Naive thymus-derived CD4-positive, alpha-beta T cell (primary cell): ENCODE measurements at regions of chr7 and their contacts with region 1.

Region 1: GRCh38 chr7:75738987-75739795 is 450 bp upstream of the HIP1 start:
- DNase-seq: peak; percentile 98 to 99 (median 99)
- ATAC-seq: peak; percentile 97
- H3K4me3 ChIP-seq: peak overlapping the region; percentile 93
- H3K4me3 Mint-ChIP-seq: peak overlapping the region; percentile 82 to 100 (median 97)
- H3K27ac ChIP-seq: peak overlapping the region; percentile 80
- H3K27ac Mint-ChIP-seq: peak overlapping the region; percentile 28 to 99 (median 94)
- H3K4me1 ChIP-seq: peaks cover 4 to 15% of the 10 kb centered on the region in 2 donors
- H3K4me1 Mint-ChIP-seq: peaks cover 0 to 19% (median 14%) of the 10 kb centered on the region in 7 donors
- H3K27me3 ChIP-seq: no peaks in the 10 kb centered on the region
- H3K27me3 Mint-ChIP-seq: peaks cover 0 to 41% (median 4%) of the 10 kb centered on the region in 5 donors

Region 2: DNA sequence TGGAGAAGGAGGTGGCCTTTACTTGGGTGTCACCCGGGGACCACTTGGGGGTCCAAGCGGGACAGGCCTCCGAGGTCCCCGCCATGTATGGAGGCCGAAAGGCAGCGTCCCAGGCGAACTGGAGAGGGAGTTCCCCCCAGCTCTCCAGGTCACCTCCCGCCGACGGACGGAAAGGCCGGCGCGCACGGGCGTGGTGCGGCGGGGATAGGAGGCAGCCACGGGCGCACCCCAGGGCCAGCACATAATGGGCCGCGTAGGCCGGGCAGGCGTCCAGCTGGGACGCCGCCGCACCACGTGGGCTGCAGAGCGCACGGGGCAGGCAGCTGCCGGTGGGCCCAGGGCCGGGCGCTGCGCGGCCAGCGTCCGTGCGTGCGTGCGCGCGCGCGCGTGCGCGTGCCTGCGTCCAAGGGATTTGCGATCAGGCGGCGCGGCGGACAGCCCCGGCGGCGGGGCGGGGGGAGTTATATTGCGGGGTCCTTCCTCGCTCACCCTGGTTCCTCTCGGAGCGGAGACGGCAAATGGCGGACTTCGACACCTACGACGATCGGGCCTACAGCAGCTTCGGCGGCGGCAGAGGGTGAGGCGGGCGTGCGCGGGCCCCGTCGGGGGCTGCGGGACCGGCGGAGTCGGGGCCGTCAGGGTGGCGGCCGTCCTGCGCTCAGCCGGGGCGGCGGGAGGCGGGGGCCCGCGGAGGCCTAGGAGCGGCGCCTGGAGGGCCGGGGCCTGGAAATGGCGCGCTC is 1565.2 kb before region 1 on chr7 and contains the start of gene EIF4H:
- CTCF ChIA-PET with region 1: no interaction called
- POLR2A ChIA-PET with region 1: no interaction called
- intact Hi-C with region 1: loop called in 1 of 2 experiments (anchors 10 kb)
- DNase-seq: peak; percentile 90 to 97 (median 95)
- ATAC-seq: peak; percentile 97
- H3K4me3 ChIP-seq: peak within 1 kb of the TSS; percentile 87
- H3K4me3 Mint-ChIP-seq: peak within 1 kb of the TSS; percentile 86 to 98 (median 92)
- H3K27ac ChIP-seq: peak within 1 kb of the TSS; percentile 99
- H3K27ac Mint-ChIP-seq: peak within 1 kb of the TSS; percentile 88 to 97 (median 94)
- H3K4me1 ChIP-seq: peaks cover 41 to 43% of the 10 kb centered on the region in 2 donors
- H3K4me1 Mint-ChIP-seq: peaks cover 32 to 57% (median 47%) of the 10 kb centered on the region in 7 donors
- H3K27me3 ChIP-seq: no peaks in the 10 kb centered on the region
- H3K27me3 Mint-ChIP-seq: no peaks in the 10 kb centered on the region
- total RNA-seq, gene EIF4H: 163 to 284 (median 223) TPM

Region 3: DNA sequence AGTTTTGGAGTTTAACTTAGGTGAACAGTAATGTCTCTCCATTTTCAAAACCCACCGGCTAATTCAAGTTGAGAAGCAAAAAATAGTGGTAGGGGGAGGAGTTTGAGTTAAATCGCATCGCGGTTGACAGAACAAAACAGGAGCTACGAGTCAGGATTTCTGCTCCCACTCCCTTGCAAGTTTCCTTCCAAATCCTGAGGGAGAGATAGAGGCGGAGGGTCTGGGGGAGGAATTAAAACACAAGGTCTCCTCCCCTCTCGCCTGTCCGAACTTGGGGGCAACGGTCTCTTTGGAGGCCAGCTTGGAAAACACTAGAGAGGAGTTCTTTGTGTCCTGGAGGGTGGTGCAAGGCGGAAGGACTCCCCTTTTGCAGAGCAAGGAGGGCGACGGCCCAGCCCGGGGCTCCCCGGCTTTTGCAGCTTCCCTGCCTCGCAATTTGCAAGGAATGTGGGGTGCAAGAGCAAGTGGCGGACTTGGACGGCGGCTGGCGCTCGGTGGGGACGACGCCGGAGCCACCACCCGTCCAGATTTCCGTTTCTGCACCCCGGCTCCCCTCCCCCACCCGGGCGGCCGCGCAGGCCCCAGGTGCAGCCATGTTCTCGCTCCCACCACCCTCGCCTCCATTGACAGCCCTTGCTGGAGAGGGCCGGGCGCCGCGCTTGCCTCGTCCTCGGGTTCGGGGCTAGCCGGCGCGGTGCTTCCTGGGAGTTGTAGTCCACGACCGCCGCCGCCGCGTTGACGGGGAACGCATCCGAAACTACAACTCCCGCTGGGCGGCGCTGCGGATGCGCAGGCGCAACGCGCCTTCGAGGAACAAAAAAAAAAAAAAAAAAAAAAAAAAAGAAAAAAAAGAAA is 1082.1 kb before region 1 on chr7:
- CTCF ChIA-PET with region 1: no interaction called
- POLR2A ChIA-PET with region 1: no interaction called
- intact Hi-C with region 1: loop called in 1 of 2 experiments (anchors 5 kb)
- DNase-seq: peak; percentile 94 to 97 (median 97)
- ATAC-seq: peak; percentile 88
- H3K4me3 ChIP-seq: peak overlapping the region; percentile 96
- H3K4me3 Mint-ChIP-seq: peak overlapping the region; percentile 90 to 97 (median 94)
- H3K27ac ChIP-seq: peak overlapping the region; percentile 89
- H3K27ac Mint-ChIP-seq: peak overlapping the region; percentile 86 to 98 (median 94)
- H3K4me1 ChIP-seq: peaks cover 12 to 21% of the 10 kb centered on the region in 2 donors
- H3K4me1 Mint-ChIP-seq: peaks cover 35 to 55% (median 43%) of the 10 kb centered on the region in 7 donors
- H3K27me3 ChIP-seq: no peaks in the 10 kb centered on the region
- H3K27me3 Mint-ChIP-seq: peaks cover 0 to 2% (median 0%) of the 10 kb centered on the region in 5 donors

Region 4: GRCh38 chr7:75798770-75799169 is 59.6 kb after region 1 on chr7:
- CTCF ChIA-PET with region 1: no interaction called
- POLR2A ChIA-PET with region 1: no interaction called
- intact Hi-C with region 1: no loop called
- DNase-seq: no peak
- ATAC-seq: no peak
- H3K4me3 ChIP-seq: no peak overlapping the region
- H3K4me3 Mint-ChIP-seq: no peak overlapping the region
- H3K27ac ChIP-seq: no peak overlapping the region
- H3K27ac Mint-ChIP-seq: no peak overlapping the region
- H3K4me1 ChIP-seq: no peaks in the 10 kb centered on the region
- H3K4me1 Mint-ChIP-seq: peaks cover 0 to 2% (median 0%) of the 10 kb centered on the region in 7 donors
- H3K27me3 ChIP-seq: no peaks in the 10 kb centered on the region
- H3K27me3 Mint-ChIP-seq: peaks cover 0 to 10% (median 7%) of the 10 kb centered on the region in 5 donors

Region 5: GRCh38 chr7:75914730-75915585 is 175.8 kb after region 1 on chr7 and contains the start of gene POR:
- CTCF ChIA-PET with region 1: no interaction called
- POLR2A ChIA-PET with region 1: no interaction called
- intact Hi-C with region 1: loop called in 1 of 2 experiments (anchors 1 kb)
- DNase-seq: peak; percentile 93 to 100 (median 99)
- ATAC-seq: peak; percentile 99
- H3K4me3 ChIP-seq: peak within 1 kb of the TSS; percentile 79
- H3K4me3 Mint-ChIP-seq: peak within 1 kb of the TSS; percentile 91 to 94 (median 92)
- H3K27ac ChIP-seq: peak within 1 kb of the TSS; percentile 100
- H3K27ac Mint-ChIP-seq: peak within 1 kb of the TSS; percentile 94 to 99 (median 98)
- H3K4me1 ChIP-seq: peaks cover 12 to 19% of the 10 kb centered on the region in 2 donors
- H3K4me1 Mint-ChIP-seq: peaks cover 18 to 50% (median 35%) of the 10 kb centered on the region in 7 donors
- H3K27me3 ChIP-seq: no peaks in the 10 kb centered on the region
- H3K27me3 Mint-ChIP-seq: peaks cover 0 to 3% (median 0%) of the 10 kb centered on the region in 5 donors
- total RNA-seq, gene POR: 45.9 to 72.3 (median 69.7) TPM

Region 6: DNA sequence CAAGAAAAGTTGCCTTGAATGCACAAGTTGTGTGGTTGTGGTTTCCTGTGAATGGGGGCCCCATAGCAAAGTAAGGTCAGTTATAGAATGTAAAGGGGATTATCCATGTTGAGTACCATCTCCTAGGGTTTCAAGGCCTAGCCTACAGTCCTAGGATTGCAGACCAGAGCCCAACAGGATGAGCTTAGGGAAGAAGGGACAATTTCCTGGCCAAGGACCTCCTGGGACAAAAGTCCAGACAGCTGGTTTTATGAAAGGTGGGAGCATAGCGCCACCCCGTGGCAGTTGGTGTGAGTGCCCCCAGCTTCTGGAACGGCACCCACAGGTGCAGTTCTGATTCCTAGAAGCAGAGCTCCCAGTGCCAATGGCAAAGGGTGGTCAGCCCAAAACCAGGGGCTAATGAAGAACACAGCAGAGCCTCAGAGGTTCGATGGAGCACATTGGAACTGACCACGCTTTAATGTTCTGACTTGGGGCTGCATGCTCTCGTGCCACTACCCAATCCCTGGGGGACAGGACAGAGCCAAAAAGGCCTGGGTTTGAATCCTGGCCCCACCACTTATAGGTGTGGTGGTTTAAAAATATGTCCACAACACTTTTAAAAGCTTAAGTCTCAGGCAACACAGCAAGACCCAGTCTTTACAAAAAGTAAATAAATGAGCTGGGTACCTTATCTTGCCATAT is 281.0 kb after region 1 on chr7:
- CTCF ChIA-PET with region 1: no interaction called
- POLR2A ChIA-PET with region 1: no interaction called
- intact Hi-C with region 1: loop called in 1 of 2 experiments (anchors 1 kb)
- DNase-seq: peak; percentile 40 to 73 (median 58)
- ATAC-seq: peak; percentile 75
- H3K4me3 ChIP-seq: no peak overlapping the region
- H3K4me3 Mint-ChIP-seq: peak overlapping the region in 1 of 10 donors; percentile 40
- H3K27ac ChIP-seq: no peak overlapping the region
- H3K27ac Mint-ChIP-seq: peak overlapping the region in 1 of 9 donors; percentile 14
- H3K4me1 ChIP-seq: peaks cover 7 to 10% of the 10 kb centered on the region in 2 donors
- H3K4me1 Mint-ChIP-seq: peaks cover 0 to 23% (median 19%) of the 10 kb centered on the region in 7 donors
- H3K27me3 ChIP-seq: no peaks in the 10 kb centered on the region
- H3K27me3 Mint-ChIP-seq: no peaks in the 10 kb centered on the region

Region 7: DNA sequence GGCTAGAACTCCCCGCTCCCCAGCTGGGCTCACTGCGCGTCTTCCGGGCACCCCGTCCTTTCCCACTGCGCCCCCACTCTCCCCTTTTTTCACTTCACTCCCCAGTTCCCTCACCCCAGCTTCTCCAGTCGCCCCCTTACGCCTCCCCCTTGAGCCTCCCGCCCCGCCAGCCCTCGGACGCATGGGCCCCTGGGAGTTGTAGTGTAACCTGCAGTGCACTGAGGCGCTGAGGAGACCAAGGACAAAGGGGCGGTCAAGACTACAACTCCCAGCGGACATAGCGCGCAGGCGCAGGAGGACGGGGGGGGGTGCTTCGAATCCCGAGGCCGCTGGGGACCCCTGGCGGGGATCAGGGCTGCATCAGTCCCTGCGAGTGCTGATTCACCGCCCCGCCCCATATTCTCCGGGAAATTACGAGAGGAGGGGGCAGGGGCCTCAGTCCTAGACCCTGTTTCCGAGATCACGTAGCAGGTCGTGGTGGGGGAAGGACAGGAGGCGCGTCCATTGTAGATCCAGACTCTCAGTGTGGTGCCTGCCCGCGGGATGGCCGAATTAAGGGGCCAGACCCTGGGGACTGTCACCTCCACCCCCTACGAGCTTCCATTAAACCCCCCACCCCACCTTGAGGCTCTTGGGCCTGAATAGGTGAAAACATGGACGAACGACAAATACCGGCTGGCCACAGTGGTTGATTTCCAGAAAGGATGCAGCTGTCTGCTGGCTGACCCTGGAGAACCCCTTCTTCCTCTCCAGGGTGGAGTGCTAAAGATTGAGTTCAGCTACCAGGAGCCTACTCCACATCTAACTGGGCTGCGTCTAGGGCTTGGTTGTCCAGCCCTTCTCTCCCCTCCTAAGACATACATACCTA is 620.2 kb after region 1 on chr7:
- CTCF ChIA-PET with region 1: no interaction called
- POLR2A ChIA-PET with region 1: no interaction called
- intact Hi-C with region 1: loop called in 1 of 2 experiments (anchors 5 kb)
- DNase-seq: peak; percentile 87 to 96 (median 95)
- ATAC-seq: peak; percentile 94
- H3K4me3 ChIP-seq: peak overlapping the region; percentile 72
- H3K4me3 Mint-ChIP-seq: peak overlapping the region; percentile 84 to 99 (median 95)
- H3K27ac ChIP-seq: peak overlapping the region; percentile 92
- H3K27ac Mint-ChIP-seq: peak overlapping the region; percentile 66 to 99 (median 93)
- H3K4me1 ChIP-seq: peaks cover 4 to 31% of the 10 kb centered on the region in 2 donors
- H3K4me1 Mint-ChIP-seq: peaks cover 28 to 46% (median 43%) of the 10 kb centered on the region in 7 donors
- H3K27me3 ChIP-seq: no peaks in the 10 kb centered on the region
- H3K27me3 Mint-ChIP-seq: no peaks in the 10 kb centered on the region